ENCODE measurements at regions of chr1 and their contacts with region 1.

Region 1: GRCh38 chr1:181936768-181937581 is 124.5 kb downstream of the ZNF648 start:
- DNase-seq: peak; percentile 19 to 50 (median 24)
- H3K4me3 ChIP-seq: peak overlapping the region in 1 of 2 donors; percentile 11
- H3K4me3 Mint-ChIP-seq: peak overlapping the region in 7 of 8 donors; percentile 23 to 69 (median 51)
- H3K27ac ChIP-seq: no peak overlapping the region
- H3K27ac Mint-ChIP-seq: no peak overlapping the region
- H3K4me1 ChIP-seq: no peaks in the 10 kb centered on the region
- H3K4me1 Mint-ChIP-seq: no peaks in the 10 kb centered on the region
- H3K27me3 ChIP-seq: no peaks in the 10 kb centered on the region
- H3K27me3 Mint-ChIP-seq: peaks cover 1 to 2% of the 10 kb centered on the region in 2 donors

Region 2: DNA sequence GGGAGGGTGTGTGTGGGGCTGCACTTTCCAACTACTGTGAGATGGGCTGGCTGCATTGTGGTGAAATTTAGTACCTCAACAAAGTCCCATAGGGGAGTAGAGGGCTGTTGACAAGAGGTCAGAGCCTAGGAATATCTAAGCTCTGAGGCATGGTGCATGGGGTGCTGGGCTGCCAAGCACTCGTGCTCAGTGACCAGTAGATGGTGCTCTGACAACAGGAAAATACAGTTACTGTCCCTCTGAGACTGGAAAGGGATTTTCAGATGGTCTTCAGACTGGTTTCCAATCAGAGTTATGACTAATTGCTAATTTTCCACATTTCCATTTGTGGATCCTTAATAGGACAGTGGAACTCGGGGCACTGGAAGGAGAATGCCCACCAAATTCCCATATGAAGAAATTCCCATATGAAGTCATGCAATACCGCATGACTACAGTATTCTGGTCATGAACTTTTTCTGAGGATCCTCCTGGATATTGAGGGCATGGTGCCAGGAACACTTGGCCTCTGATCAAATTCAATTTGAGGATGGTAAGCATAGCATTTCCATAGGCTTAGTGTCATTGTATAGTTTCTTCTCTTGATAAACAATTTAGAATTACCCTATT is 457.7 kb before region 1 on chr1:
- CTCF ChIA-PET with region 1: no interaction called
- POLR2A ChIA-PET with region 1: no interaction called
- intact Hi-C with region 1: loop called (anchors 1 kb)
- DNase-seq: peak in 3 of 5 donors; percentile 18 to 31 (median 19)
- H3K4me3 ChIP-seq: no peak overlapping the region
- H3K4me3 Mint-ChIP-seq: no peak overlapping the region
- H3K27ac ChIP-seq: no peak overlapping the region
- H3K27ac Mint-ChIP-seq: no peak overlapping the region
- H3K4me1 ChIP-seq: peaks cover 10% of the 10 kb centered on the region
- H3K4me1 Mint-ChIP-seq: peaks cover 1 to 13% (median 6%) of the 10 kb centered on the region in 4 donors
- H3K27me3 ChIP-seq: peaks cover 10% of the 10 kb centered on the region
- H3K27me3 Mint-ChIP-seq: peaks cover 24 to 27% of the 10 kb centered on the region in 2 donors

Measured in CD4-positive, alpha-beta memory T cell (primary cell).